ENCODE measurements at regions of chr16 and their contacts with region 1.

Region 1: DNA sequence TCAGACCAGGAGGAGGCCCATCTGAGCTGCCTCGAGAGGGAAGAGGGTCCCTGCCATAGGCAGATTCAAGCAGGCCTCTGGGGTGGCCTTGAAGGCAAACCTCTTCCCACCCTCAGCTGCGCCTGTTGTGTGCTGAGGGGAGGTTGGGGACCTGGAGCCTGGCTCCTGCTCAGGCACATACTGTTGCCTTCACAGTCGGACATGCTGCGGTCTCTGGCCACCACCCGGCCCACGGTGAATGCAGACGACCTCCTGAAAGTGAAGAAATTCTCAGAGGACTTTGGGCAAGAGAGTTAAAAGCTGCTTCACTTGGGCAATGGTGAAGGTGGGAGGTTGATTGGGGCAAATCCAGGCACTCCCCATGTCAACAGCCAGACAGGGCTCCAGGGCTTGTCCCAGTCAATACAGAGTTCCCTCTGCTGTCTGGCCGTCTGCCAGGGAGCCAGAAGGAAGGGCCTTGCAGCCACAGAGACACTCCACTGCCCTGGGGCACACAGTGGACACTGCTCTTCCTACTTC is 6.3 kb downstream of the PDF start:
- DNase-seq: no peak
- ATAC-seq: peak in 1 of 2 experiments; percentile 8; a peak in 1 of 6 replicates
- H3K4me3 ChIP-seq: no peak overlapping the region
- H3K27ac ChIP-seq: 0 out of 6 replicates have a peak overlapping the region, but pooled peaks of 1 of the 2 experiments have one; percentile 34
- H3K4me1 ChIP-seq: peaks cover 34% of the 10 kb centered on the region
- CTCF ChIP-seq: no peak
- EP300 ChIP-seq: no peak
- POLR2A ChIP-seq: no peak
- RAD21 ChIP-seq: no peak

Region 2: DNA sequence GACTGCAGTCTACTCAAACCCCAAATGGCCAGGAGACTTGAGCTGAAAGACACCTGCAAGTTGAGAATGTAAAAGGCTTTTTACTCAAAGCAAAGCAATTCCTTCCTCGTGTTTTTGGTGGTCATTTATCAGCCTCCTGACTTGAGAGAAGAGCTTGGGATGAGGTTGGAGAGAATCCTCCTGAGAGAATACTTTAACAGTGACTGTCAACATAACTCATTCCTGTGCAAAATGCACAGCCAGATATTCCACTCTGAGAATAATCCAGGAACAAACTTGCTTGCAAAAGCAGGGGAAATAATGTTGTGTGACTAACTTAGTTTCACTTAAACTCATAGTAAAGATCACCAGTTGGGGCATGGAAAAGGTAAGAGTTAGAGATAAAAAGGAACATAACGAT is 83.7 kb before region 1 on chr16:
- CTCF ChIA-PET with region 1: no interaction called
- POLR2A ChIA-PET with region 1: no interaction called
- DNase-seq: no peak
- ATAC-seq: no peak
- H3K4me3 ChIP-seq: no peak overlapping the region
- H3K27ac ChIP-seq: no peak overlapping the region
- H3K4me1 ChIP-seq: no peaks in the 10 kb centered on the region
- CTCF ChIP-seq: no peak
- EP300 ChIP-seq: no peak
- POLR2A ChIP-seq: no peak
- RAD21 ChIP-seq: no peak

Region 3: GRCh38 chr16:69310653-69311532 is 13.2 kb before region 1 on chr16 and contains the start of gene VPS4A:
- CTCF ChIA-PET with region 1: interaction called, 31 read pairs
- POLR2A ChIA-PET with region 1: interaction called, 3 read pairs
- DNase-seq: peak; percentile 80 to 96
- ATAC-seq: peak; percentile 89 to 93
- H3K4me3 ChIP-seq: peak within 1 kb of the TSS; percentile 97
- H3K27ac ChIP-seq: peak within 1 kb of the TSS; percentile 93 to 94
- H3K4me1 ChIP-seq: peaks cover 13% of the 10 kb centered on the region; the same call in 2 of the 3 replicates
- CTCF ChIP-seq: peak; percentile 75
- EP300 ChIP-seq: no peak
- POLR2A ChIP-seq: peak; percentile 69
- RAD21 ChIP-seq: peak; percentile 33 to 41; a peak in 3 of 5 replicates
- polyA plus RNA-seq, gene VPS4A: 12.9 and 18.2 TPM in 2 replicates